ENCODE measurements at regions of chr1 and their contacts with region 1.

Region 1: DNA sequence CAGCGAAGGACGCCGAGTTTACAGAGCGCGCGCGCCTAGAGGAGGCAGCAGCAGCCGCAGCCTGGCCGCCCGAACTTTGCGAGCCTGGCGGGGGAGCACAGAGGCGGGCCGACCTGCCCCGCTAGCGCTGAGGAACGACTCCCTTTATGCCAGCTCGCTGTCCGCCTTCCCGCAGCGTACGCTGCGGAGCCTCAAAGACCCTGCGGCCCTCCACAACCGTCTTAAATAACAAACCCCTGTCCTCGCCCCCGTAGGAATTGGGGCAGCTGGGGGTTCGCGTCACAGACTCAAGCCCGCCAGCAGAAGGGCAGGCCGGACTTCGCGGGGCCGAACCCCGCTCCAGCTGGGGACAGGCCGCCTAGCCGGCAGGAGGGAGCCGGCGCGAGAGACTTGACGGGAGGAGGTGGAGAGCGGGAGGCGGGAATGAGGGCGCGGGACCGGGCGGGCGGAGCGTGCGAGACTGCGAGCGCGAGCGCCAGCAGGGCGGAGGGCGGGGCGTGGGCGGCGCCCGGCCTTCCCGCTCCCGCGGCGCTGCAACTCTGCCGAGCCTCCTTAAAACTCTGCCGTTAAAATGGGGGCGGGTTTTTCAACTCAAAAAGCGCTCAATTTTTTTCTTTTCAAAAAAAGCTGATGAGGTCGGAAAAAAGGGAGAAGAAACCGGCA is 1.8 kb upstream of the CDKN2C start:
- DNase-seq: peak; percentile 88
- ATAC-seq: peak; percentile 83
- H3K4me3 Mint-ChIP-seq: peak overlapping the region; percentile 93
- H3K27ac Mint-ChIP-seq: peak overlapping the region; percentile 84
- H3K4me1 Mint-ChIP-seq: peaks cover 25% of the 10 kb centered on the region
- H3K27me3 Mint-ChIP-seq: peaks cover 4% of the 10 kb centered on the region

Region 2: DNA sequence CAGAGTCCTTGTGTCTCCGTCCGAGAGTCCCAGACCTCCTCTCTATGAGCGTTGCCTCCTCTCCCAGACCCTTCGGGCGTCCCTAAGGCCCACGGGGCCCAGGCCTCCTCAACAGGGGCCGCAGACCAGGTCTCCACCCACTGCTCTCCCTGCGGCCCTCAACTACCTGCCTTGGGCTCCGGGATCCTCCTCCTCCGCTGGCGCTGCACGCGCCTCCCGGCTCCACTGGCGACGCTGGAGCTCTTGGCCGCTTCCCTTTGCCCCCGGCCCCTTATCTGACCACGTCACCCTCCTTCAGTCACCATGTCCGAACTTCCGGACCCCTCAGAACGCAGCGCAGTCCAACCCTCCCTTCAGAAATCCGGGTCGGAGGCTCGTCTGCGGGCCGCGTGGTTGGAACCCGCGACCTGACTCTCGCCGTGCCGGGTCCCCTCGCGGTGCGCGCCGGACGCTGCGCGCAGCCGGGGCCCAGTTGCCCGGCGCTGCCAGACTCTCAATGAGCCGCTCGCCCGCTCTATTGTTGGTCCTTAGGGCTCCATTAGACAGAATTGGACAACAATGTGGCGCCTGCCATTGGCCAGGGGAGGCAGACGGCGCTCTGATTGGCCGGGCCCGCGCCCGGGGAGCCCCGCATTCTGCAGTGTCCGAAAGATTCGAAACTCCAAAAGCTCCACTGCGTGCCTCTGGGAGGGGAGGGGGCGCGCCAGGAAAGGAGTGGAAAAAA is 545.2 kb before region 1 on chr1 and contains the start of gene DMRTA2:
- CTCF ChIA-PET with region 1: no interaction called
- POLR2A ChIA-PET with region 1: no interaction called
- intact Hi-C with region 1: loop called in 1 of 2 experiments (anchors 5 kb)
- DNase-seq: peak; percentile 10
- ATAC-seq: no peak
- H3K4me3 Mint-ChIP-seq: peak within 1 kb of the TSS; percentile 68
- H3K27ac Mint-ChIP-seq: no peak within 1 kb of the TSS
- H3K4me1 Mint-ChIP-seq: peaks cover 58% of the 10 kb centered on the region
- H3K27me3 Mint-ChIP-seq: peaks cover 68% of the 10 kb centered on the region
- total RNA-seq, gene DMRTA2: not detected

Region 3: GRCh38 chr1:50929376-50929958 is 38.8 kb before region 1 on chr1:
- CTCF ChIA-PET with region 1: interaction called, 6 read pairs
- POLR2A ChIA-PET with region 1: no interaction called
- intact Hi-C with region 1: loop called in 1 of 2 experiments (anchors 2 kb)
- DNase-seq: no peak
- ATAC-seq: no peak
- H3K4me3 Mint-ChIP-seq: no peak overlapping the region
- H3K27ac Mint-ChIP-seq: no peak overlapping the region
- H3K4me1 Mint-ChIP-seq: peaks cover 37% of the 10 kb centered on the region
- H3K27me3 Mint-ChIP-seq: no peaks in the 10 kb centered on the region

Region 4: DNA sequence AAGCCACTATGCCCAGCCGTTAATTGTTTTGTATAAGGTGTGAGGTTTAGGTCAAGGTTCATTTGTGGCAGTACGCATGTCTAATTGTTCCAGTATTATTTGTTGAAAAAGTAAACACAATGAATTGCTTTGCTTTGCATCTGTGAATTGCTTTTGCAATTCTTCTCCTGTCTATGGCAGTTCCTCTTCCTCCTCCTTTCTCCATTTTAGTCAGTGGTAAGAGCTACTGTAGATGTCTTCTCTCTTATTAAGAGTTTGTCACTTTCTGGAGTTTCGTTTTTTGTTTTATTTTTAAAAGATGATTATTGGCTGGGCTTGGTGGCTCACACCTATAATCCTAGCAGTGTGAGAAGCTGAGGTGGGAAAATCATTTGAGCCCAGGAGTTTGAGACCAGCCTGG is 162.9 kb after region 1 on chr1:
- CTCF ChIA-PET with region 1: no interaction called
- POLR2A ChIA-PET with region 1: no interaction called
- intact Hi-C with region 1: loop called in 1 of 2 experiments (anchors 1 kb)
- DNase-seq: no peak
- ATAC-seq: no peak
- H3K4me3 Mint-ChIP-seq: no peak overlapping the region
- H3K27ac Mint-ChIP-seq: no peak overlapping the region
- H3K4me1 Mint-ChIP-seq: no peaks in the 10 kb centered on the region
- H3K27me3 Mint-ChIP-seq: peaks cover 31% of the 10 kb centered on the region

Region 5: GRCh38 chr1:51147394-51147793 is 179.1 kb after region 1 on chr1:
- CTCF ChIA-PET with region 1: no interaction called
- POLR2A ChIA-PET with region 1: no interaction called
- intact Hi-C with region 1: no loop called
- DNase-seq: no peak
- ATAC-seq: no peak
- H3K4me3 Mint-ChIP-seq: no peak overlapping the region
- H3K27ac Mint-ChIP-seq: no peak overlapping the region
- H3K4me1 Mint-ChIP-seq: no peaks in the 10 kb centered on the region
- H3K27me3 Mint-ChIP-seq: peaks cover 8% of the 10 kb centered on the region

Region 6: DNA sequence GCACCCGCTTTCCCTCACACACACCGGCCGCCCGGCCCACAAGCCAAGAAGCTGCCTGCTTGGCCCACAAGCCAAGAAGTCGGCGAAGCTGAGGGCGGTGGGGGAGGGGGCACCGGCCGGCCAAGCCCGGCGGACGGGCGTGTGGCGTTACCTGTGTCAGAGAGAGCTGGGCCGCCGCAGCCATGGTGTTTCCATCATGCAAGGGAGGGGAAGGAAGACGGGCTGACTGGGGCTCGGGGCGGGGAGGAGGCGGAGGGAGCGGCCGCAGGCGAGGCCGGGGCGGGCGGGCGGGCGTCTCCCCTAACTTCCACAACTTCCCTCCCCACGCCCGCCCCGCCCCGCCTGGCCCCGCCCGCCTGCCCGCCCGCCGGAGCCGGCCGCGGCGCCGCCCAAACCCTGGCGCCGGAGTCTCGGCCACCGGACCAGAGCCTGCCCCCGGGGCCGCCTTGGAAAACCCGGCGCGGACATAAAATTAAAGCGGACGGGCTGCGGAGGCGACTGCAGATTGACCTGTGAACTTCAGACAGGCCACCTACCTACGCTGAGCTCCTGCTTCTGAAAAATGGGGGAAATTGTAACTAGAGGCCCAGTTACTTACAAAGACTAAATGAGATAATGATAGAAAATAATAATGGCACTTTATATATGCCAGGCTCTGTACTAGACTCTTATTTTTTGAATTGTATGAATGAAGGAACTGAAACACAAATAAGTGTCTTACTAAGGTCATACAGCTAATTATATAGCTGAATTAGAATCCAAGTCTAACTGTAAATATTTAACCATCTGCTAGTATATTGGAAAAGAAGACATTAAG is 551.0 kb after region 1 on chr1 and contains the start of gene EPS15:
- CTCF ChIA-PET with region 1: no interaction called
- POLR2A ChIA-PET with region 1: no interaction called
- intact Hi-C with region 1: loop called in 1 of 2 experiments (anchors 5 kb)
- DNase-seq: peak; percentile 95
- ATAC-seq: peak; percentile 76
- H3K4me3 Mint-ChIP-seq: peak within 1 kb of the TSS; percentile 100
- H3K27ac Mint-ChIP-seq: peak within 1 kb of the TSS; percentile 93
- H3K4me1 Mint-ChIP-seq: peaks cover 48% of the 10 kb centered on the region
- H3K27me3 Mint-ChIP-seq: no peaks in the 10 kb centered on the region
- total RNA-seq, gene EPS15: 59.6 to 61.6 TPM

Region 7: GRCh38 chr1:51729156-51729823 is 761.0 kb after region 1 on chr1:
- CTCF ChIA-PET with region 1: no interaction called
- POLR2A ChIA-PET with region 1: no interaction called
- intact Hi-C with region 1: loop called in 1 of 2 experiments (anchors 1 kb)
- DNase-seq: peak; percentile 97
- ATAC-seq: peak; percentile 97
- H3K4me3 Mint-ChIP-seq: peak overlapping the region; percentile 84
- H3K27ac Mint-ChIP-seq: peak overlapping the region; percentile 83
- H3K4me1 Mint-ChIP-seq: peaks cover 40% of the 10 kb centered on the region
- H3K27me3 Mint-ChIP-seq: no peaks in the 10 kb centered on the region